Adrenal gland (tissue), 19 donors: ENCODE measurements at regions of chr17 and their contacts with region 1.

Region 1: DNA sequence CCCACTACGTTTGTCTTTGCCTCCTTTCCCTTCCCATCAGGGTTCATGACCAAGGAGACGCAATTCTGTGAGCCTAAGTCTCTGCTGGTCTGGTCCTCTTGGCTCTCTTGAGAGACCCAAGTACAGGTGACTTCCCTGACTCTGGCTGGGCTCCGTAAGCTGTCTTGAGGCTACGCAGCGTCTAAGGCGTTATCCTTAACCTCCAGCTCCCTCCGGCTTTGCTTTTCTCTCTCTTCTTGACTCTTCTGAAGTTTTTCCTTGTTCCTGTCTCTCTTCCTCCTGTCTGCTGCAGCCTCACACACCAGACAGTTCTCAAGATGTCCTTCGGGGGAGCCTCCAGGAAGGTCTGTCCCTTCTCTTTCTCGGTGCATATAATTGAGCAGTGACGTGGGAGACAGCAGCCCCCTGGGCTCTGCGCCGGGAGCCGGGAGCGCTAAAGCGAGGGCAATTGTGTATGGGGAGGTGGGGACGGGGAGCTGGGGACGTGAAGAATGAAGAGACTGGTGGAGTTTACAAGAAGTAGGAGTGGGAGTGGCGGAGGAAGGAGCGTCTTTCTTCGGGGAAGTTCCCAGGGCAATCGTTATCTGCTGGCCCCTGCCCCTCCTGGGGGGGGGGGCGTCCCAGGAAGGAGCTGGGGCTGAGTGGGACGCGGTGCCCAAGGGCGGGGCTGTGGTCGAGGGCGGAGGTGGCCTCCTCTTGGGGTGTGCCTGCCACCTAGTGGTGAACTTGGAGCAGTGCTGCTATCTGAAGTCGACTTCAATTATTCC is 6.9 kb upstream of the PIRT start:
- DNase-seq: peak; percentile 61 to 85 (median 74)
- H3K4me3 ChIP-seq: peak overlapping the region in 2 of 4 donors; percentile 44 to 57
- H3K27ac ChIP-seq: no peak overlapping the region
- H3K4me1 ChIP-seq: no peaks in the 10 kb centered on the region
- H3K27me3 ChIP-seq: no peaks in the 10 kb centered on the region
- CTCF ChIP-seq: peak; percentile 90 to 99 (median 98)
- POLR2A ChIP-seq: no peak

Region 2: GRCh38 chr17:10557422-10557821 is 287.4 kb before region 1 on chr17:
- intact Hi-C with region 1: no loop called
- DNase-seq: no peak
- H3K4me3 ChIP-seq: no peak overlapping the region
- H3K27ac ChIP-seq: no peak overlapping the region
- H3K4me1 ChIP-seq: no peaks in the 10 kb centered on the region
- H3K27me3 ChIP-seq: no peaks in the 10 kb centered on the region
- CTCF ChIP-seq: no peak
- POLR2A ChIP-seq: no peak

Region 3: DNA sequence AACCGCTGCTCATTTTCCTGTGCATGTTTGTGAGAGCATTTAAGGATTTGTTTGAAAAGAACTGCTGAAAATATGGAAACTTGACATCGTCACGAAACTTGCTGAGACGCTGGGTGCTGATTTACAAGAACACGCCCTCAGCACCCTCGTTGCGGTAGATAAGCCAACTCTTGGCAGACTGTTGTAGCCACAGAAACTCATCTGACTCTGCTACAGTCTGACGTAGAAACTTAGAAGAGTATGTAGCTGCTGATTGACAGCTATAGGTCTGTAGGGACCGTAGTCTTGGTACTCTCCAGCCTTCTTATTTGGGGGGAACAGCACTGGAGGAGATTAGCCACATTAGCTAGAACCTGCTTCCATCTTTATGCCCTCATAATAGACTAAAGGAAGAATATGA is 259.3 kb before region 1 on chr17:
- intact Hi-C with region 1: no loop called
- DNase-seq: no peak
- H3K4me3 ChIP-seq: no peak overlapping the region
- H3K27ac ChIP-seq: no peak overlapping the region
- H3K4me1 ChIP-seq: no peaks in the 10 kb centered on the region
- H3K27me3 ChIP-seq: no peaks in the 10 kb centered on the region
- CTCF ChIP-seq: no peak
- POLR2A ChIP-seq: no peak

Region 4: GRCh38 chr17:10646392-10646990 is 198.3 kb before region 1 on chr17:
- intact Hi-C with region 1: loop called in 1 of 2 experiments (anchors 10 kb)
- DNase-seq: peak; percentile 62 to 85 (median 71)
- H3K4me3 ChIP-seq: no peak overlapping the region
- H3K27ac ChIP-seq: no peak overlapping the region
- H3K4me1 ChIP-seq: no peaks in the 10 kb centered on the region
- H3K27me3 ChIP-seq: no peaks in the 10 kb centered on the region
- CTCF ChIP-seq: peak; percentile 64 to 79 (median 69)
- POLR2A ChIP-seq: no peak

Region 5: GRCh38 chr17:10737168-10737622 is 107.6 kb before region 1 on chr17:
- intact Hi-C with region 1: loop called (anchors 5 kb)
- DNase-seq: peak; percentile 54 to 83 (median 69)
- H3K4me3 ChIP-seq: no peak overlapping the region
- H3K27ac ChIP-seq: no peak overlapping the region
- H3K4me1 ChIP-seq: peaks cover 4 to 8% of the 10 kb centered on the region in 2 donors
- H3K27me3 ChIP-seq: no peaks in the 10 kb centered on the region
- CTCF ChIP-seq: peak; percentile 52 to 90 (median 81)
- POLR2A ChIP-seq: no peak

Region 6: GRCh38 chr17:10790491-10791401 is 54.1 kb before region 1 on chr17:
- intact Hi-C with region 1: no loop called
- DNase-seq: peak; percentile 38 to 72 (median 61)
- H3K4me3 ChIP-seq: no peak overlapping the region
- H3K27ac ChIP-seq: peak overlapping the region in 1 of 5 donors; percentile 4
- H3K4me1 ChIP-seq: peaks cover 0 to 16% of the 10 kb centered on the region in 2 donors
- H3K27me3 ChIP-seq: no peaks in the 10 kb centered on the region
- CTCF ChIP-seq: no peak
- POLR2A ChIP-seq: no peak